Activated CD4-positive, alpha-beta memory T cell treated with anti-CD3 and anti-CD28 coated beads, Interleukin-2, amount 10 ng/mL, durations not matched to agents 7 days and 5 days (primary cell): ENCODE measurements at regions of chr3 and their contacts with region 1.

Region 1: DNA sequence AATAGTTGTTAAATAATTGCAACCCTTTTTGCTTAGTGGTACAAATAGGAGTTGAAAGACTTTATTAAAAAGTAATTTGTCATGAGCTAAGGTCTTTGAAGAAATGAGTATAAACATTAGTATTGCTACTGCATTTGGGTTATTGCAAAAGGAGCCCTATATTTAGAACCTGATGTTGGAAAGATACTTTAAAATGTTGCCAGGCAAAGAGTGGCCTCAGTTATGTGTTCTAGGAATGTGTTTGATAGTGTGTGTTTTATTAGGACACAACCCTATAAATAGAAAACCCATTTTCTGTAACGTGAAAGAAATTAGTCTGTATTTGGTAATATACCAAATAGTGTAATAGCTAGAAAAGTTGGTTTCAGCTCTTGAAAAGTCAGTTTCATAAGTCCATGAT is 10.7 kb downstream of the VPS8 start:
- DNase-seq: no peak
- H3K4me3 Mint-ChIP-seq: no peak overlapping the region
- H3K27ac Mint-ChIP-seq: no peak overlapping the region
- H3K4me1 Mint-ChIP-seq: peaks cover 3% of the 10 kb centered on the region
- H3K27me3 Mint-ChIP-seq: no peaks in the 10 kb centered on the region

Region 2: GRCh38 chr3:184716622-184717398 is 105.8 kb before region 1 on chr3:
- CTCF ChIA-PET with region 1: no interaction called
- POLR2A ChIA-PET with region 1: no interaction called
- DNase-seq: peak; percentile 13
- H3K4me3 Mint-ChIP-seq: no peak overlapping the region
- H3K27ac Mint-ChIP-seq: no peak overlapping the region
- H3K4me1 Mint-ChIP-seq: peaks cover 9% of the 10 kb centered on the region
- H3K27me3 Mint-ChIP-seq: peaks cover 18% of the 10 kb centered on the region

Region 3: GRCh38 chr3:184786280-184786941 is 36.2 kb before region 1 on chr3:
- CTCF ChIA-PET with region 1: no interaction called
- POLR2A ChIA-PET with region 1: no interaction called
- DNase-seq: peak; percentile 36
- H3K4me3 Mint-ChIP-seq: no peak overlapping the region
- H3K27ac Mint-ChIP-seq: no peak overlapping the region
- H3K4me1 Mint-ChIP-seq: peaks cover 28% of the 10 kb centered on the region
- H3K27me3 Mint-ChIP-seq: peaks cover 6% of the 10 kb centered on the region

Region 4: GRCh38 chr3:184805351-184806038 is 17.2 kb before region 1 on chr3:
- CTCF ChIA-PET with region 1: interaction called, 13 read pairs
- POLR2A ChIA-PET with region 1: interaction called, 29 read pairs
- DNase-seq: no peak
- H3K4me3 Mint-ChIP-seq: no peak overlapping the region
- H3K27ac Mint-ChIP-seq: no peak overlapping the region
- H3K4me1 Mint-ChIP-seq: peaks cover 8% of the 10 kb centered on the region
- H3K27me3 Mint-ChIP-seq: peaks cover 15% of the 10 kb centered on the region

Region 5: DNA sequence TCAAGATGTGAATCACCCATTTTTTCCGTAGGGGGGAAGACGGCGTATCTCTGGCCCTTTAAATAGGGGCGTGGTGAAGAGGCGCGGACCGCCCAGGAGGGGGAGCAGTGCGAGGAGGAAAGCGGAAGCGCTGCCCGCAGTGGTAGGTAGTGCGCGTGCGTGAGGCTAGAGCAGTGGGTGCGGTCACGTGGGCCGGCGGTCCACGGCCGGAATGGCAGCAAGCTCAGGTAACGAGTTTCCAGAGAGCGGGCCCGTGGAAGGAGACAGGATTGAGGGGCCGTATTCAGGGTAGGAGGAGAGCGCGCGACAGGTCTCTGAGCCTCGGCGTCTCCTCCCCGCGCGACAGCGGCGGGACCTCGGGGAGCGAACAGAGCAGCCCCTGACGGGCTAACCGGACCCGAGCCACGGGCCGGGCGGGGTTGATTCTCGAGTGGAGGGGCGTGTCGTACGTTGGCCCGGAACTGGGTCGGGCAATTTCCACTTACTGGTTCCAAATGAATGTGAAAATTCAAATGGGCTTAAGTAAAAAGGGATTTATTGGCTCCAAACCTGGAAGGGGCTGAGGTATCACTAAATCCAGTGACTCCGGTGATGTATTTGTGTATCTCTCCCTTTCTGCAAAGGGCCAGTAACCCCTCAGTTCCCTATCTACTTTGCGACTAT is 10.5 kb before region 1 on chr3 and contains the start of gene VPS8:
- CTCF ChIA-PET with region 1: interaction called, 9 read pairs
- POLR2A ChIA-PET with region 1: interaction called, 29 read pairs
- DNase-seq: peak; percentile 98
- H3K4me3 Mint-ChIP-seq: peak within 1 kb of the TSS; percentile 92
- H3K27ac Mint-ChIP-seq: peak within 1 kb of the TSS; percentile 91
- H3K4me1 Mint-ChIP-seq: peaks cover 58% of the 10 kb centered on the region
- H3K27me3 Mint-ChIP-seq: no peaks in the 10 kb centered on the region
- total RNA-seq, gene VPS8: 60.8 to 61.2 TPM

Region 6: GRCh38 chr3:185024966-185025365 is 202.3 kb after region 1 on chr3:
- CTCF ChIA-PET with region 1: no interaction called
- POLR2A ChIA-PET with region 1: no interaction called
- DNase-seq: no peak
- H3K4me3 Mint-ChIP-seq: no peak overlapping the region
- H3K27ac Mint-ChIP-seq: no peak overlapping the region
- H3K4me1 Mint-ChIP-seq: no peaks in the 10 kb centered on the region
- H3K27me3 Mint-ChIP-seq: no peaks in the 10 kb centered on the region

Region 7: GRCh38 chr3:185112186-185112585 is 289.5 kb after region 1 on chr3:
- CTCF ChIA-PET with region 1: no interaction called
- POLR2A ChIA-PET with region 1: no interaction called
- DNase-seq: no peak
- H3K4me3 Mint-ChIP-seq: no peak overlapping the region
- H3K27ac Mint-ChIP-seq: no peak overlapping the region
- H3K4me1 Mint-ChIP-seq: no peaks in the 10 kb centered on the region
- H3K27me3 Mint-ChIP-seq: peaks cover 29% of the 10 kb centered on the region